ENCODE measurements at regions of chr16 and their contacts with region 1.

Region 1: DNA sequence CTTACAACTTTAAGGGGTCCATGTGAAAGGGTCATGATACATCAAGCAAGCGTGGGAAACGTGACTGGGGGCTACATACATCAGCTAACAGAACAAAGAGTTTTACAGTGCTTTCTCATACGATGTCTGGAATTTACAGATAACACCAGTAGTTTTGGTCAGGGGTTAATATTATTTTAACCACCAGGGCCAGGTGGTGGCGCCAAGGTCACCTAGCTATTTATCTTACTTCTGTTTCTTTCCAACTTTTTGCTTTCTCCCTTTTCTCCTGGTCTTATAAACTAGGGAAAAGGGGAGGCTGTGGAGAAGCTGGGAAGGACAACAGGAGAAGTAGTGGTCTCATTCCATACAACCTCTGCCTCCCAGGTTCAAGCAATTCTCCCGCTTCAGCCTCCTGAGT is 37.9 kb downstream of the CLEC3A start:
- DNase-seq: no peak
- H3K4me3 ChIP-seq: no peak overlapping the region
- H3K27ac ChIP-seq: no peak overlapping the region
- H3K4me1 ChIP-seq: no peaks in the 10 kb centered on the region
- H3K27me3 ChIP-seq: no peaks in the 10 kb centered on the region
- CTCF ChIP-seq: no peak

Region 2: GRCh38 chr16:77430787-77431585 is 629.3 kb before region 1 on chr16:
- CTCF ChIA-PET with region 1: interaction called, 10 read pairs
- POLR2A ChIA-PET with region 1: no interaction called
- intact Hi-C with region 1: no loop called
- DNase-seq: no peak
- H3K4me3 ChIP-seq: no peak overlapping the region
- H3K27ac ChIP-seq: no peak overlapping the region
- H3K4me1 ChIP-seq: no peaks in the 10 kb centered on the region
- H3K27me3 ChIP-seq: peaks cover 60% of the 10 kb centered on the region
- CTCF ChIP-seq: no peak